GM10248 (cell line): ENCODE measurements at regions of chr11 and their contacts with region 1.

Region 1: GRCh38 chr11:74702383-74703007 is 28.7 kb downstream of the CHRDL2 start:
- DNase-seq: peak; percentile 83
- CTCF ChIP-seq: peak; percentile 94

Region 2: GRCh38 chr11:74683279-74683871 is 19.1 kb before region 1 on chr11:
- CTCF ChIA-PET with region 1: interaction called, 33 read pairs
- POLR2A ChIA-PET with region 1: no interaction called
- DNase-seq: no peak
- CTCF ChIP-seq: peak; percentile 12

Region 3: GRCh38 chr11:74720596-74721478 is 18.3 kb after region 1 on chr11:
- CTCF ChIA-PET with region 1: interaction called, 76 read pairs
- POLR2A ChIA-PET with region 1: no interaction called
- DNase-seq: no peak
- CTCF ChIP-seq: no peak

Region 4: GRCh38 chr11:74739546-74740270 is 37.2 kb after region 1 on chr11:
- CTCF ChIA-PET with region 1: interaction called, 68 read pairs
- POLR2A ChIA-PET with region 1: no interaction called
- DNase-seq: peak; percentile 76
- CTCF ChIP-seq: peak; percentile 91